Psoas muscle (tissue), 8 donors: ENCODE measurements at regions of chr1 and their contacts with region 1.

Region 1: DNA sequence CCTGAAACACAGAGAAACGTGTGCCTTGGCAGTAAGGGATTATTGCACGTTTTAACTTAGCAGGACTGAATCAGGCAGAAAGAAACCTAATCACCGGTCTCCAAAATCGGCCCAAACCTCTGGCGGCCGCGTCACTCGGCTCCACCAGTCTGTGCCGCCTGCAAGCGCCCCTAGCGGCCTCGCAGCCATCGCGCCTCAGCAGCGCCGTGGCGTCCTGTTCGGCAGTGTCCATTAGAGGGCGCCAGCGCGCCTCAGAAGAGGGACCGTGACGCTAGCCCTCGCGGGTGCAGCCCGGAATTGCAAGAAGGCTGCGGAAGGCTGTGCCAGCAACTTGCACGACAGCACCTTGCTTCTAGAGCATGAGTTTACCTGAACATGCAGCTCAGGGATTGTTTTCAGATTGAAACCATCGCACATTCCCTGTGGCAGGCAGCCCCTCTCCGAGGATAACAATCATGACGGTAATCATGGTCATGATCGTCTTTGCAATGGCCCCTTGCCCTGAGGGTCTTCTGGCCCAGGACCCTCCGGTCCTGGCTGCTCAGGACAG is 164.4 kb downstream of the TRIM33 start:
- DNase-seq: peak; percentile 94 to 98
- ATAC-seq: peak; percentile 99 to 100 (median 100)
- H3K4me3 ChIP-seq: peak overlapping the region; percentile 71
- H3K27ac ChIP-seq: peak overlapping the region; percentile 54
- H3K4me1 ChIP-seq: peaks cover 9% of the 10 kb centered on the region
- H3K27me3 ChIP-seq: no peaks in the 10 kb centered on the region
- CTCF ChIP-seq: peak; percentile 100

Region 2: GRCh38 chr1:114431026-114431425 is 84.5 kb after region 1 on chr1:
- intact Hi-C with region 1: loop called in 1 of 2 experiments (anchors 5 kb)
- DNase-seq: no peak
- ATAC-seq: no peak
- H3K4me3 ChIP-seq: no peak overlapping the region
- H3K27ac ChIP-seq: no peak overlapping the region
- H3K4me1 ChIP-seq: no peaks in the 10 kb centered on the region
- H3K27me3 ChIP-seq: no peaks in the 10 kb centered on the region
- CTCF ChIP-seq: no peak

Region 3: GRCh38 chr1:114558544-114558943 is 212.0 kb after region 1 on chr1:
- intact Hi-C with region 1: loop called in 1 of 2 experiments (anchors 10 kb)
- DNase-seq: no peak
- ATAC-seq: no peak
- H3K4me3 ChIP-seq: no peak overlapping the region
- H3K27ac ChIP-seq: no peak overlapping the region
- H3K4me1 ChIP-seq: no peaks in the 10 kb centered on the region
- H3K27me3 ChIP-seq: no peaks in the 10 kb centered on the region
- CTCF ChIP-seq: no peak